CD4-positive, alpha-beta memory T cell (primary cell): ENCODE measurements at regions of chr22 and their contacts with region 1.

Region 1: DNA sequence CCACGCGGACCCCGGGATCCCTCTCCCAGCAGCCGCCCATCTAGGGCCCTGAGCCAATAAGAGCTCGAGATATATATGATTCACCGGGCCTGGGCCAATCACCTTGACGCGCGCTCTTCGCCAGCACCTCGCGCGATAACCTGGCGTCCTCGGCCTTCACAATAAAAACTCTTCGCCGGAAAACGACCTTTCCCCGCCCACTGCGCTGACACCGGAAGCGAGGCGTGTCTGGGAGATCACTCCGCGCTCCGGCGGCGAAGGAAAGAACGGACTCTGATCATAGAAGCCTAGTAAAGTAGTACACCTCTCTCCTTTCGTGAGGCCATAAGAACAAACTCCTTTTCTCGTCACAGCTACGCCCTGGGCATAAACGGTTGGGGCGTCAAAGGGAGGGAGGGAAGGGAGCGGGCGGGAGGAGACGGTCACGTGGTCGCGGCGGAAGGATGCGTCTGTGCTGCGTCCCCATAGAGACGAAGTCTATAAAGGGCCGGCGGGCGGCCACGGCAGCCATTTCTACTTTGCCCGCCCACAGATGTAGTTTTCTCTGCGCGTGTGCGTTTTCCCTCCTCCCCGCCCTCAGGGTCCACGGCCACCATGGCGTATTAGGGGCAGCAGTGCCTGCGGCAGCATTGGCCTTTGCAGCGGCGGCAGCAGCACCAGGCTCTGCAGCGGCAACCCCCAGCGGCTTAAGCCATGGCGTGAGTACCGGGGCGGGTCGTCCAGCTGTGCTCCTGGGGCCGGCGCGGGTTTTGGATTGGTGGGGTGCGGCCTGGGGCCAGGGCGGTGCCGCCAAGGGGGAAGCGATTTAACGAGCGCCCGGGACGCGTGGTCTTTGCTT is at the start of gene ATF4:
- DNase-seq: peak; percentile 96 to 98 (median 97)
- H3K4me3 ChIP-seq: peak within 1 kb of the TSS; percentile 85 to 96
- H3K4me3 Mint-ChIP-seq: peak within 1 kb of the TSS; percentile 92 to 99 (median 97)
- H3K27ac ChIP-seq: peak within 1 kb of the TSS; percentile 85
- H3K27ac Mint-ChIP-seq: peak within 1 kb of the TSS; percentile 96 to 100 (median 99)
- H3K4me1 ChIP-seq: peaks cover 46% of the 10 kb centered on the region
- H3K4me1 Mint-ChIP-seq: peaks cover 28 to 60% (median 47%) of the 10 kb centered on the region in 4 donors
- H3K27me3 ChIP-seq: no peaks in the 10 kb centered on the region
- H3K27me3 Mint-ChIP-seq: peaks cover 3 to 4% of the 10 kb centered on the region in 2 donors
- total RNA-seq, gene ATF4: 265 to 278 TPM

Region 2: DNA sequence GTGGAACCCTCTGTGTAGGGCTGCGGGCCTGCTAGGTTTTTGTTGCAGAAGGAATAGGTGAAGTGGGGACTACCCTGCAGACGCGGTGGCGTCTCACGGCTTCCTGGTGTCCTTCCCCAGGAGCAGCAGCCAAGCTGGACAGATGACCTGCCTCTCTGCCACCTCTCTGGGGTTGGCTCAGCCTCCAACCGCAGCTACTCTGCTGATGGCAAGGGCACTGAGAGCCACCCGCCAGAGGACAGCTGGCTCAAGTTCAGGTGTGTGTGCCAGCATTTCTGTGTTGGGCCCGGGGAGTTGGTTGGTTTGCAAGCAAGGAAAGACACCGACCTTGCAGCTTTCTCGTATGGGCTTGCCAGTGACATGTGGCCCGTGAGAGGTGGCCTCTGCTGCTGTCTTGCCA is 105.4 kb before region 1 on chr22:
- CTCF ChIA-PET with region 1: interaction called, 6 read pairs
- POLR2A ChIA-PET with region 1: interaction called, 4 read pairs
- intact Hi-C with region 1: loop called (anchors 1 kb)
- DNase-seq: no peak
- H3K4me3 ChIP-seq: no peak overlapping the region
- H3K4me3 Mint-ChIP-seq: no peak overlapping the region
- H3K27ac ChIP-seq: no peak overlapping the region
- H3K27ac Mint-ChIP-seq: peak overlapping the region in 1 of 7 donors; percentile 47
- H3K4me1 ChIP-seq: peaks cover 32% of the 10 kb centered on the region
- H3K4me1 Mint-ChIP-seq: peaks cover 22 to 40% (median 31%) of the 10 kb centered on the region in 4 donors
- H3K27me3 ChIP-seq: no peaks in the 10 kb centered on the region
- H3K27me3 Mint-ChIP-seq: no peaks in the 10 kb centered on the region

Region 3: GRCh38 chr22:39490135-39490798 is 30.0 kb before region 1 on chr22:
- CTCF ChIA-PET with region 1: interaction called, 345 read pairs
- POLR2A ChIA-PET with region 1: interaction called, 83 read pairs
- intact Hi-C with region 1: no loop called
- DNase-seq: peak; percentile 66 to 83 (median 77)
- H3K4me3 ChIP-seq: no peak overlapping the region
- H3K4me3 Mint-ChIP-seq: peak overlapping the region in 2 of 8 donors; percentile 17 to 71
- H3K27ac ChIP-seq: no peak overlapping the region
- H3K27ac Mint-ChIP-seq: peak overlapping the region in 6 of 7 donors; percentile 10 to 81 (median 44)
- H3K4me1 ChIP-seq: peaks cover 6% of the 10 kb centered on the region
- H3K4me1 Mint-ChIP-seq: peaks cover 5 to 13% (median 9%) of the 10 kb centered on the region in 4 donors
- H3K27me3 ChIP-seq: no peaks in the 10 kb centered on the region
- H3K27me3 Mint-ChIP-seq: no peaks in the 10 kb centered on the region

Region 4: GRCh38 chr22:39496131-39496838 is 24.0 kb before region 1 on chr22:
- CTCF ChIA-PET with region 1: interaction called, 345 read pairs
- POLR2A ChIA-PET with region 1: interaction called, 125 read pairs
- intact Hi-C with region 1: no loop called
- DNase-seq: peak; percentile 42 to 65 (median 46)
- H3K4me3 ChIP-seq: no peak overlapping the region
- H3K4me3 Mint-ChIP-seq: no peak overlapping the region
- H3K27ac ChIP-seq: no peak overlapping the region
- H3K27ac Mint-ChIP-seq: peak overlapping the region in 5 of 7 donors; percentile 3 to 75 (median 30)
- H3K4me1 ChIP-seq: no peaks in the 10 kb centered on the region
- H3K4me1 Mint-ChIP-seq: peaks cover 3 to 11% (median 9%) of the 10 kb centered on the region in 4 donors
- H3K27me3 ChIP-seq: no peaks in the 10 kb centered on the region
- H3K27me3 Mint-ChIP-seq: no peaks in the 10 kb centered on the region

Region 5: GRCh38 chr22:39502109-39502788 is 18.0 kb before region 1 on chr22 and contains the start of gene MIEF1:
- CTCF ChIA-PET with region 1: interaction called, 345 read pairs
- POLR2A ChIA-PET with region 1: interaction called, 125 read pairs
- intact Hi-C with region 1: loop called (anchors 1 kb)
- DNase-seq: peak; percentile 79 to 91 (median 82)
- H3K4me3 ChIP-seq: peak within 1 kb of the TSS; percentile 63 to 66
- H3K4me3 Mint-ChIP-seq: peak within 1 kb of the TSS; percentile 95 to 99 (median 96)
- H3K27ac ChIP-seq: peak within 1 kb of the TSS; percentile 70
- H3K27ac Mint-ChIP-seq: peak within 1 kb of the TSS; percentile 78 to 98 (median 96)
- H3K4me1 ChIP-seq: peaks cover 31% of the 10 kb centered on the region
- H3K4me1 Mint-ChIP-seq: peaks cover 13 to 50% (median 35%) of the 10 kb centered on the region in 4 donors
- H3K27me3 ChIP-seq: no peaks in the 10 kb centered on the region
- H3K27me3 Mint-ChIP-seq: no peaks in the 10 kb centered on the region
- total RNA-seq, gene MIEF1: 40.5 to 44.3 TPM

Region 6: GRCh38 chr22:39859903-39860588 is 339.8 kb after region 1 on chr22:
- CTCF ChIA-PET with region 1: no interaction called
- POLR2A ChIA-PET with region 1: no interaction called
- intact Hi-C with region 1: no loop called
- DNase-seq: no peak
- H3K4me3 ChIP-seq: no peak overlapping the region
- H3K4me3 Mint-ChIP-seq: peak overlapping the region in 6 of 8 donors; percentile 7 to 45 (median 36)
- H3K27ac ChIP-seq: no peak overlapping the region
- H3K27ac Mint-ChIP-seq: peak overlapping the region in 2 of 7 donors; percentile 5 to 14
- H3K4me1 ChIP-seq: peaks cover 9% of the 10 kb centered on the region
- H3K4me1 Mint-ChIP-seq: peaks cover 11 to 20% (median 16%) of the 10 kb centered on the region in 4 donors
- H3K27me3 ChIP-seq: no peaks in the 10 kb centered on the region
- H3K27me3 Mint-ChIP-seq: peaks cover 0 to 4% of the 10 kb centered on the region in 2 donors